Posterior cingulate gyrus (tissue), 11 donors: ENCODE measurements at regions of chr6 and their contacts with region 1.

Region 1: GRCh38 chr6:52361945-52362442 is at the start of gene PAQR8:
- DNase-seq: peak; percentile 68 to 98 (median 76)

Region 2: GRCh38 chr6:52098634-52099185 is 263.3 kb before region 1 on chr6:
- intact Hi-C with region 1: no loop called
- DNase-seq: no peak

Region 3: DNA sequence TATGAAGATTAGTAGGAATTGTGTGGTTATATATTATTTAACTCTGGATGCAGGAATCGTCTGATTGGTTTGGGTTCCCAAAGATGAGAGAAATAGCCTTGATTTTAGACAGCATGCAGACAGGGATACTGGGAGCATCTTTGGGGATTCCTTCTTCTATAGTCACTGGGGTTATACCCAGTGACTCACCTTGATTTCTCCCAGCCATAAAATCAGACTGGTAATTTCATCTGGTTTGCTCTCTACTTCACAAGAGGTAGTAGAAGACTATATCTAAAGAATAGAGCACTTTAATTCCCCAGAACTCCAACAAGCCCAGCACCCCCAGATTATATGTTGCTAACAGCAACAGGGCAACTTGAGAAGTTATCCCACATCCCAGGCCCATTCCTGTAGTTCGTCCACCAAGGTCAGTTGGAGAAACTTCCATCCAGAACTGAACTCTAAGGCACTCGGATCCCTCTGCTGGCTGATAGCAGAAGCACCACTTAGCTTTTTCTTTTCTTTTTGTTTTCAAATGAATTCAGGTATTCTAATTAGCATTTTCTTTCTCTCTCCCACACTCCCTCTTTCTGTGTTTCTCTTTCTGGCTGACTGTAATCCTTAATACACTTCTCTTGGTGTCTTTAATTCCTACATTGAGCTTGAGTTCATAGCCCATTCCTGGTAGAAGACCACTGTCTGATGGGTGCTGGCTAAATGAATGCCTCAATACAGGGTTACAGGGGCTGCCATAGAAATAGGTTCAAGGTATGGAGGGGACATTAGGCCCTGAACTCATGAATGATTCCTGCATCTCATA is 37.7 kb after region 1 on chr6:
- intact Hi-C with region 1: loop called (anchors 5 kb)
- DNase-seq: peak in 1 of 10 donors; percentile 31